Sciatic nerve (tissue), 2 donors: ENCODE measurements at regions of chr11 and their contacts with region 1.

Region 1: GRCh38 chr11:43238341-43238740 is 73.5 kb upstream of the API5 start:
- DNase-seq: no peak
- ATAC-seq: no peak

Region 2: DNA sequence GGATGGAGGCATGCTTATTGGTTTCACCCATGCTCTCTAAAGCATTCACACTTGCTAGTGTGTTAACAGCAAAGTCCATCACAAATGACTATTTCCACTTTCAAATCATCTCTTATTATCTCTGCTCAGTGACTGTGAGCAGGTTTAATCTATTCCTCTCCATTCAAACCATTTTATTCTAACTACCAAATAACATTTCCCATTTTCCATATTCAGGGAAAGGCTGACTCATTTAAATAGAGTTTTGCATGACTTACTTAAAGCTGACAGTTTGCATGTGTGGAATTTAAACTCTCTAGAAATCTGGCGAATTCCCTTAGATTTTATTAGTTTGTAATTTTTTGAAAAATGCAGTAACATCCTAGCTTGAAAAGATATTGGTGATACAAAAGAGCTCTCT is 1163.2 kb before region 1 on chr11:
- intact Hi-C with region 1: no loop called
- DNase-seq: no peak
- ATAC-seq: no peak

Region 3: DNA sequence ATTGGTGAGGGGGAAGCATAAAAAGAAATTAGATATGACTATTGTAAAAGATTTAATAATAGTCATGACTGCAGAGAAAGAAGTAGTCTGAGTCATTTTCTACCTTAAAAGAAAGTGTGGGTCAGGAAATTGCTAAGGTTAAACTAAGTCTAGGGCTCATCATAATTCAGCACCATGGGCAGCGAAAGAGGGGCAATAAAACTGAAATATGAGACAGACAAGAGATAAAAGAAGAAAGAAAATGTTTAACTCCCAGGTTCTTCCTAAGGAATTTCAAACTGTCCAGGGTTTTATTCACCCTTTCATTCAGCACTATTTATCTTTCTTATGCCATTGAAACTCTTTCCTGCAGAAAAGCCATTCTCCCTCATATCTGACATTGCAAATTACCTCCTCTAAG is 41.0 kb before region 1 on chr11:
- intact Hi-C with region 1: no loop called
- DNase-seq: no peak
- ATAC-seq: no peak

Region 4: GRCh38 chr11:43222215-43222614 is 16.1 kb before region 1 on chr11:
- intact Hi-C with region 1: no loop called
- DNase-seq: no peak
- ATAC-seq: no peak

Region 5: DNA sequence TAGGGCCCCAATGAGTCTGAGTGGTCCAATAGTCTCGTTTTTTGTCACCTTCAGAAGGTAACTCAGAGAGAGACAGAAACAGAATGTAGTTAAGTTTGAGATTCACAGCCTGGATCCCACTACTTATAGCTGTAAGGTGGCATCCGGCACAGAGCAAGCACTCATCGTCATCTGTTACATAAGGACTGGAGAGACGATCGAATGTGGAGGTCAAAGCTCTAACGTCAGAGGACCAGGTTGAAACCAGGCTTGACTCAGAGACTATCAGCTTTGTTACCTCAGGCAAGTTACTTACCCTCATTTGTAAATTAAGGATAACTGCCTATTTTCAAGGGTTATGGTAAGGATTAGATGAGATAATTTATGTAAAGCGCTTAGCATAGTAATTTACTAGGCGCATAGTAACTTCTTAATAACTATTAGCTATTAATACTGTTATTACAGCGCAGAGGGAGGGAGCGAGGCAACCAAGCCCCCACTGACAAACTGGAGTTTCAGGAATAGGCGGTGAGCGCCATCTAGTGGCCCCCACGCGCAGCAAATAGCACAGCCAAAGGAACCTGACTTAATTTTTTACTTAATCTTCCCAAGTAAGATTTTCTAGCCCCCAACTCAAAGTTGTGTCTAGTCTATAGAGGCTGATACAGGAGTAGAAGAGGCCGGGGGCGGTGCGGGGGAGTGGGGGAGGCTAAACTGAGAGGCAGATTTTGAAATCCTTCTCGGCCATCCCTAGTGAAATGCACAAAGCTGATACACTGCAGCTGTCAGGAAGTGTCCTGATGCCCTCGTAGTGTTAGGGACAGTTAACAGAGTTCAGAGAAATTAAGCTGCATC is 44.5 kb after region 1 on chr11:
- intact Hi-C with region 1: loop called (anchors 1 kb)
- DNase-seq: peak; percentile 62
- ATAC-seq: no peak

Region 6: GRCh38 chr11:44203270-44204043 is 965.1 kb after region 1 on chr11:
- intact Hi-C with region 1: no loop called
- DNase-seq: no peak
- ATAC-seq: no peak